ENCODE measurements at regions of chr17 and their contacts with region 1.

Region 1: DNA sequence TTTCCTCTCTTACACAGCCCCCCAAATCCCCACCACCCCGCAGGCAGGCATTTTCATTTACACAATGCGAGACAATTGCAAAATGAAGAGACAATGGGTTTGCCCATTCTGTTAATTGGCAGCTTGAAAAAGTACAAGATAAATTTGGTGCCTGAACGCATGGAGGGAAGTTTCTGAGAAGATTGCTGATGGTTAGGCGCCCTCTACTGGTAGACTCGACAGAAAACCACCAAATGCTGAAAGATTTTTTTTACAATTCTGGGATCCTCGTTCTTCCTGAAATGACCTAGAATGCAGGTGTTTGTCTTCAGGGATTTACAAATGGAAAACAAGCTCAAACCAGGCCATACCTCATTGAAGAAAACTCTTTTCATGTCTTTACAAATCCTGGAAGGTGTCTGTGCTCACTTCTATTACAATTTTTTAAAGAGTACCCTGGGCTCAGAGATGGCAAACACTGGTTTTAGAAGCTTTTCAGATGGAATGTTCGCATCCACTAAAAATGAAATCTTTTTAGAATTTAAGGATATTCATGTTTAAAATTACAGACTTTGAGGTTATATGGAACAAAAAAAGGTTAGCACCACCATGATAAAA is 338.5 kb downstream of the PMP22 start:
- DNase-seq: peak; percentile 29
- ATAC-seq: no peak
- H3K4me3 ChIP-seq: no peak overlapping the region
- H3K27ac ChIP-seq: no peak overlapping the region
- H3K4me1 ChIP-seq: no peaks in the 10 kb centered on the region
- H3K27me3 ChIP-seq: no peaks in the 10 kb centered on the region
- CTCF ChIP-seq: peak; percentile 43 to 83 (median 65); a peak in 5 of 6 replicates
- POLR2A ChIP-seq: no peak
- RAD21 ChIP-seq: peak; percentile 78

Region 2: GRCh38 chr17:13114601-13115031 is 1812.0 kb before region 1 on chr17:
- CTCF ChIA-PET with region 1: no interaction called
- POLR2A ChIA-PET with region 1: no interaction called
- RAD21 ChIA-PET with region 1: no interaction called
- intact Hi-C with region 1: loop called (anchors 5 kb)
- DNase-seq: peak; percentile 13
- ATAC-seq: peak; percentile 99
- H3K4me3 ChIP-seq: no peak overlapping the region
- H3K27ac ChIP-seq: no peak overlapping the region
- H3K4me1 ChIP-seq: no peaks in the 10 kb centered on the region
- H3K27me3 ChIP-seq: peaks cover 20% of the 10 kb centered on the region; the same call in 1 of the 2 replicates
- CTCF ChIP-seq: peak; percentile 33 to 87 (median 87); a peak in 5 of 6 replicates
- POLR2A ChIP-seq: no peak
- RAD21 ChIP-seq: peak; percentile 58

Region 3: GRCh38 chr17:13306310-13306962 is 1620.2 kb before region 1 on chr17:
- CTCF ChIA-PET with region 1: no interaction called
- POLR2A ChIA-PET with region 1: no interaction called
- RAD21 ChIA-PET with region 1: no interaction called
- intact Hi-C with region 1: loop called (anchors 2 kb)
- DNase-seq: peak; percentile 81
- ATAC-seq: peak; percentile 93
- H3K4me3 ChIP-seq: no peak overlapping the region
- H3K27ac ChIP-seq: no peak overlapping the region
- H3K4me1 ChIP-seq: 0 out of 4 replicates have a peak, but pooled peaks cover 0 to 3% of the 10 kb centered on the region in 2 experiments
- H3K27me3 ChIP-seq: no peaks in the 10 kb centered on the region
- CTCF ChIP-seq: peak; percentile 29 to 85 (median 78); a peak in 5 of 6 replicates
- POLR2A ChIP-seq: no peak
- RAD21 ChIP-seq: peak; percentile 63

Region 4: GRCh38 chr17:13337864-13338371 is 1588.7 kb before region 1 on chr17:
- CTCF ChIA-PET with region 1: no interaction called
- POLR2A ChIA-PET with region 1: no interaction called
- RAD21 ChIA-PET with region 1: no interaction called
- intact Hi-C with region 1: loop called (anchors 5 kb)
- DNase-seq: peak; percentile 54
- ATAC-seq: peak; percentile 79
- H3K4me3 ChIP-seq: peak overlapping the region; percentile 35 to 50
- H3K27ac ChIP-seq: no peak overlapping the region
- H3K4me1 ChIP-seq: peaks cover 0 to 4% of the 10 kb centered on the region in 2 experiments; a peak in 1 of 4 replicates
- H3K27me3 ChIP-seq: no peaks in the 10 kb centered on the region
- CTCF ChIP-seq: peak; percentile 58 to 82 (median 72); a peak in 5 of 6 replicates
- POLR2A ChIP-seq: no peak
- RAD21 ChIP-seq: peak; percentile 77

Region 5: GRCh38 chr17:14300575-14301278 is 625.9 kb before region 1 on chr17 and contains the start of gene HS3ST3B1:
- CTCF ChIA-PET with region 1: no interaction called
- POLR2A ChIA-PET with region 1: no interaction called
- RAD21 ChIA-PET with region 1: no interaction called
- intact Hi-C with region 1: loop called (anchors 10 kb)
- DNase-seq: peak; percentile 96
- ATAC-seq: peak; percentile 96
- H3K4me3 ChIP-seq: peak within 1 kb of the TSS; percentile 45 to 59
- H3K27ac ChIP-seq: peak within 1 kb of the TSS; percentile 55; the same call in 1 of the 2 replicates
- H3K4me1 ChIP-seq: peaks cover 11 to 28% of the 10 kb centered on the region in 2 experiments; a peak in 3 of 4 replicates
- H3K27me3 ChIP-seq: peaks cover 7% of the 10 kb centered on the region; the same call in 1 of the 2 replicates
- CTCF ChIP-seq: no peak
- POLR2A ChIP-seq: peak; percentile 39
- RAD21 ChIP-seq: no peak
- total RNA-seq, gene HS3ST3B1: 2.4 TPM

Region 6: DNA sequence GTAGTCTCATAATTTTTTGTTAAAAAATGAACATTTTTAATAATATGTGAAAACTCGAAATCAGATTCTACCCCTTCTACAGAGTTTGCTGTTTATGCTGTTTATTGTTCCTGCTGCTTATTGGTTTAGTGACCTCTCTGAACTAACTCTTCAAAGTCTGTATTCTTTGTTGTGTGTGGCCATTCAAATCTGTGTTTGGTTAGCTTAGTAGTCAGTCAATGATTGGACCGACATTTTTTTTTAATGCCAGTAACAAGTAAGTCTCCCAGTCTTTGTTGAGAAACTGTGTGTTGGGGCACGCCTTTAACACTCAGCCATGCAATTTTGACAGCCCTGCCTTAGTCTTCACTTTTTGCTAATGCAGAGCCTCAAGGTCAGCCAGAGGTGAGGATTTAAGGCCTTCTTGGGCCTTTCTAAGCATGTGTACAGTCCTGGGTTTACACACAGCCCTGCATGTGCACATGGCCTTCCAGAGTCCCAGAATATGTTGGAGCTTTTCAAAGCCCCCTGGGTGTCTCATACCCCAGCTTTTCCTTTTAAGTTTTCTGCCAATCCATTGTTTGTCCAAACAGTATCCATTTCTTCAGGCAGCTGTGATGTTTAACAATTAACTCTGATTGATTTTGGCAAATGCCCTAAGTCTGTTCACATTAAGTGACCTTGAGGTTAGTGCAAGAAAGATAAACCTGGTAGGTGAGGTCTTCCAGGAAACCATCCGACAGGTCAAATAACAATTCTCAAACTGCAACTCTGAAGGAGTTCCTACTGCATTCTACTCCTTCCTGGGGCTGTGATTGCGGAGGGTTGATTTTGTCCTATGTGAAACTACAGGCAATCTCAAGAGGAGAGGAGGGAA is 50.8 kb before region 1 on chr17:
- CTCF ChIA-PET with region 1: no interaction called
- POLR2A ChIA-PET with region 1: no interaction called
- RAD21 ChIA-PET with region 1: no interaction called
- intact Hi-C with region 1: no loop called
- DNase-seq: no peak
- ATAC-seq: no peak
- H3K4me3 ChIP-seq: no peak overlapping the region
- H3K27ac ChIP-seq: no peak overlapping the region
- H3K4me1 ChIP-seq: no peaks in the 10 kb centered on the region
- H3K27me3 ChIP-seq: no peaks in the 10 kb centered on the region
- CTCF ChIP-seq: no peak
- POLR2A ChIP-seq: no peak
- RAD21 ChIP-seq: no peak

Region 7: DNA sequence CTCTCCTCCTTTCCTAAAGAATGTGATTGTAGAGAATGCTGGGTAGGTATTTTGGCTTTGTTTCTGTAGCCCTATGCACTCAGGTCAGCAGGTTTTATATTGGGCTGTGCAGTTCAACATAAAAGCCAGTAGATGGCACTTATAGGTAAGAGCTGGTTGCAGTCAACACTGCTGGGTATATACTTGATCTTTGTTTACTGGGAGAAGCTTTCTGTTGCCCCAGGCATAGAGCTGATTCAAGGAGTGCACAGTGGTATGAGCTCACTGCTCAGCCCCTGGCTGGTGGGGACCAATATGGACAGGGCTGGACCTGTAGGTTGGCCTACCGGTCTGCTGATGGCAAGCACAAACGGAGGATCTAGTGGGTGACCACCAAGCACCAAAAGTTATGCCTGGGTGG is 40.4 kb before region 1 on chr17:
- CTCF ChIA-PET with region 1: interaction called, 16 read pairs
- POLR2A ChIA-PET with region 1: no interaction called
- RAD21 ChIA-PET with region 1: no interaction called
- intact Hi-C with region 1: no loop called
- DNase-seq: no peak
- ATAC-seq: peak; percentile 62; the same call in 1 of the 2 replicates
- H3K4me3 ChIP-seq: no peak overlapping the region
- H3K27ac ChIP-seq: no peak overlapping the region
- H3K4me1 ChIP-seq: no peaks in the 10 kb centered on the region
- H3K27me3 ChIP-seq: no peaks in the 10 kb centered on the region
- CTCF ChIP-seq: peak in 2 of 3 experiments; percentile 48 to 50; a peak in 4 of 6 replicates
- POLR2A ChIP-seq: no peak
- RAD21 ChIP-seq: peak; percentile 34; the same call in 1 of the 2 replicates

Region 8: GRCh38 chr17:15012351-15012980 is 85.8 kb after region 1 on chr17:
- CTCF ChIA-PET with region 1: no interaction called
- POLR2A ChIA-PET with region 1: no interaction called
- RAD21 ChIA-PET with region 1: no interaction called
- intact Hi-C with region 1: no loop called
- DNase-seq: no peak
- ATAC-seq: no peak
- H3K4me3 ChIP-seq: no peak overlapping the region
- H3K27ac ChIP-seq: no peak overlapping the region
- H3K4me1 ChIP-seq: no peaks in the 10 kb centered on the region
- H3K27me3 ChIP-seq: peaks cover 5% of the 10 kb centered on the region; the same call in 1 of the 2 replicates
- CTCF ChIP-seq: no peak
- POLR2A ChIP-seq: no peak
- RAD21 ChIP-seq: no peak

Measured in HCT116 (cell line).